ENCODE measurements at regions of chr5 and their contacts with region 1.

Region 1: GRCh38 chr5:179697993-179698934 is 503 bp upstream of the CANX start:
- DNase-seq: peak; percentile 99
- ATAC-seq: peak; percentile 83 to 95 (median 88)
- H3K4me3 ChIP-seq: peak overlapping the region; percentile 65
- H3K4me3 Mint-ChIP-seq: peak overlapping the region; percentile 97
- H3K27ac ChIP-seq: peak overlapping the region; percentile 81
- H3K27ac Mint-ChIP-seq: peak overlapping the region; percentile 94 to 99
- H3K4me1 ChIP-seq: peaks cover 42% of the 10 kb centered on the region
- H3K4me1 Mint-ChIP-seq: peaks cover 45 to 50% of the 10 kb centered on the region in 2 donors
- H3K27me3 ChIP-seq: no peaks in the 10 kb centered on the region
- H3K27me3 Mint-ChIP-seq: no peaks in the 10 kb centered on the region
- CTCF ChIP-seq: no peak

Region 2: GRCh38 chr5:179623003-179623880 is 75.0 kb before region 1 on chr5 and contains the start of gene HNRNPH1:
- intact Hi-C with region 1: loop called (anchors 1 kb)
- DNase-seq: peak; percentile 98 to 99
- ATAC-seq: peak; percentile 71 to 87 (median 77)
- H3K4me3 ChIP-seq: peak within 1 kb of the TSS; percentile 100
- H3K4me3 Mint-ChIP-seq: peak within 1 kb of the TSS; percentile 97
- H3K27ac ChIP-seq: peak within 1 kb of the TSS; percentile 98
- H3K27ac Mint-ChIP-seq: peak within 1 kb of the TSS; percentile 98 to 99
- H3K4me1 ChIP-seq: peaks cover 27% of the 10 kb centered on the region
- H3K4me1 Mint-ChIP-seq: peaks cover 64% of the 10 kb centered on the region in 2 donors
- H3K27me3 ChIP-seq: no peaks in the 10 kb centered on the region
- H3K27me3 Mint-ChIP-seq: no peaks in the 10 kb centered on the region
- CTCF ChIP-seq: no peak
- total RNA-seq, gene HNRNPH1: 1,749 to 2,212 (median 1,853) TPM

Region 3: GRCh38 chr5:179678223-179679013 is 19.8 kb before region 1 on chr5:
- intact Hi-C with region 1: loop called (anchors 1 kb)
- DNase-seq: peak; percentile 93 to 99
- ATAC-seq: peak; percentile 90 to 93 (median 90)
- H3K4me3 ChIP-seq: peak overlapping the region; percentile 98
- H3K4me3 Mint-ChIP-seq: peak overlapping the region; percentile 98
- H3K27ac ChIP-seq: peak overlapping the region; percentile 87
- H3K27ac Mint-ChIP-seq: peak overlapping the region; percentile 94 to 100
- H3K4me1 ChIP-seq: peaks cover 29% of the 10 kb centered on the region
- H3K4me1 Mint-ChIP-seq: peaks cover 28 to 30% of the 10 kb centered on the region in 2 donors
- H3K27me3 ChIP-seq: no peaks in the 10 kb centered on the region
- H3K27me3 Mint-ChIP-seq: no peaks in the 10 kb centered on the region
- CTCF ChIP-seq: no peak

Region 4: GRCh38 chr5:179795863-179796833 is 97.9 kb after region 1 on chr5:
- intact Hi-C with region 1: loop called (anchors 2 kb)
- DNase-seq: peak; percentile 80 to 84
- ATAC-seq: peak; percentile 75 to 87 (median 82)
- H3K4me3 ChIP-seq: peak overlapping the region; percentile 40
- H3K4me3 Mint-ChIP-seq: peak overlapping the region; percentile 75
- H3K27ac ChIP-seq: peak overlapping the region; percentile 58
- H3K27ac Mint-ChIP-seq: peak overlapping the region; percentile 23 to 56
- H3K4me1 ChIP-seq: peaks cover 44% of the 10 kb centered on the region
- H3K4me1 Mint-ChIP-seq: peaks cover 22 to 38% of the 10 kb centered on the region in 2 donors
- H3K27me3 ChIP-seq: no peaks in the 10 kb centered on the region
- H3K27me3 Mint-ChIP-seq: no peaks in the 10 kb centered on the region
- CTCF ChIP-seq: peak; percentile 73